ENCODE measurements at regions of chr4 and their contacts with region 1.

Region 1: GRCh38 chr4:107757864-107758476 is 37.9 kb upstream of the PAPSS1 start:
- DNase-seq: peak; percentile 18
- ATAC-seq: no peak
- H3K4me3 ChIP-seq: no peak overlapping the region
- H3K4me3 Mint-ChIP-seq: no peak overlapping the region
- H3K27ac ChIP-seq: no peak overlapping the region
- H3K27ac Mint-ChIP-seq: no peak overlapping the region
- H3K4me1 ChIP-seq: peaks cover 0 to 7% of the 10 kb centered on the region in 2 donors
- H3K4me1 Mint-ChIP-seq: peaks cover 10% of the 10 kb centered on the region
- H3K27me3 ChIP-seq: no peaks in the 10 kb centered on the region
- H3K27me3 Mint-ChIP-seq: peaks cover 4% of the 10 kb centered on the region
- CTCF ChIP-seq: peak; percentile 80

Region 2: GRCh38 chr4:107913281-107913899 is 155.4 kb after region 1 on chr4:
- CTCF ChIA-PET with region 1: interaction called, 9 read pairs
- POLR2A ChIA-PET with region 1: no interaction called
- intact Hi-C with region 1: loop called (anchors 1 kb)
- DNase-seq: peak; percentile 69
- ATAC-seq: peak; percentile 70
- H3K4me3 ChIP-seq: no peak overlapping the region
- H3K4me3 Mint-ChIP-seq: no peak overlapping the region
- H3K27ac ChIP-seq: no peak overlapping the region
- H3K27ac Mint-ChIP-seq: no peak overlapping the region
- H3K4me1 ChIP-seq: no peaks in the 10 kb centered on the region
- H3K4me1 Mint-ChIP-seq: peaks cover 2% of the 10 kb centered on the region
- H3K27me3 ChIP-seq: no peaks in the 10 kb centered on the region
- H3K27me3 Mint-ChIP-seq: peaks cover 6% of the 10 kb centered on the region
- CTCF ChIP-seq: peak; percentile 91